ENCODE measurements at regions of chr3 and their contacts with region 1.

Region 1: DNA sequence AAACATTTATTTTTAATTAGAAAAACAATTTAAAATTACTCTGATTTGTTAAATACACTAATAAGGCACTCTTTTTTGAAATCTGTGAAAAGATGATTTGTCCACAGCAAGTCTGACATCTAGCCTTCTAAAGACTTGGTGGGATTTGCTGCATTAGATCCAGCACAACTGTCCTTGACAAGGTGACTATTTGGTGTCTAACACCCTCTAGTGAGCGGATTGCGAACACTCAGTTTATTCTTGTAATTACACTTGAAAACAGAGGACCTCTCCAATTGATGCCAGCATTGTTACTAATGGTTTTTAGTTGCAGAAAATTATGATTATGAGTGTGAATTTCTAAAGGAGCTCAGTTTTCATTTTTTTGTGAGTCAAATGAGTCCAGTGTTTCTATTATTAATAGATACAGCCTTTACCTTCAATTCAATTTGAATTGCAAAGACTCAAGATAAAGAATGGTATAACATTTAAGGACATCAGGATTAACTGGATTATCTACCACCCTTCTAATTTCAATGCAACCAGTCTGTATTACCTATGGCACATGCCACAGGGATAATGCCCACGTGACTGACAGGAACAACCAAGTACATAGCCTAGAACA is 29.7 kb upstream of the STRIT1 start:
- DNase-seq: peak; percentile 89
- ATAC-seq: peak; percentile 91
- H3K4me3 ChIP-seq: no peak overlapping the region
- H3K27ac ChIP-seq: no peak overlapping the region
- H3K4me1 ChIP-seq: no peaks in the 10 kb centered on the region
- H3K27me3 ChIP-seq: no peaks in the 10 kb centered on the region
- CTCF ChIP-seq: peak; percentile 88
- POLR2A ChIP-seq: no peak; the same call in 1 of the 2 replicates
- RAD21 ChIP-seq: peak; percentile 95

Region 2: GRCh38 chr3:154323891-154324738 is 999.0 kb before region 1 on chr3 and contains the start of gene DHX36:
- CTCF ChIA-PET with region 1: interaction called, 4 read pairs
- POLR2A ChIA-PET with region 1: no interaction called
- dilution Hi-C with region 1: no loop called
- in situ Hi-C with region 1: loop called (anchors 10 kb)
- intact Hi-C with region 1: no loop called
- DNase-seq: peak; percentile 93
- ATAC-seq: peak; percentile 94
- H3K4me3 ChIP-seq: peak within 1 kb of the TSS; percentile 75
- H3K27ac ChIP-seq: peak within 1 kb of the TSS; percentile 72
- H3K4me1 ChIP-seq: no peaks in the 10 kb centered on the region
- H3K27me3 ChIP-seq: no peaks in the 10 kb centered on the region
- CTCF ChIP-seq: no peak
- POLR2A ChIP-seq: peak; percentile 92
- RAD21 ChIP-seq: no peak
- total RNA-seq, gene DHX36: 27.1 and 34.7 TPM in 2 replicates

Region 3: GRCh38 chr3:154334973-154335420 is 988.2 kb before region 1 on chr3:
- CTCF ChIA-PET with region 1: no interaction called
- POLR2A ChIA-PET with region 1: no interaction called
- dilution Hi-C with region 1: no loop called
- in situ Hi-C with region 1: no loop called
- intact Hi-C with region 1: loop called (anchors 2 kb)
- DNase-seq: peak; percentile 53
- ATAC-seq: peak; percentile 69; the same call in 1 of the 2 replicates
- H3K4me3 ChIP-seq: no peak overlapping the region
- H3K27ac ChIP-seq: no peak overlapping the region
- H3K4me1 ChIP-seq: no peaks in the 10 kb centered on the region
- H3K27me3 ChIP-seq: peaks cover 2% of the 10 kb centered on the region; the same call in 1 of the 2 replicates
- CTCF ChIP-seq: peak; percentile 62
- POLR2A ChIP-seq: no peak
- RAD21 ChIP-seq: peak; percentile 37

Region 4: GRCh38 chr3:154766765-154767503 is 556.2 kb before region 1 on chr3:
- CTCF ChIA-PET with region 1: interaction called, 3 read pairs
- POLR2A ChIA-PET with region 1: no interaction called
- dilution Hi-C with region 1: no loop called
- in situ Hi-C with region 1: loop called (anchors 5 kb)
- intact Hi-C with region 1: no loop called
- DNase-seq: no peak
- ATAC-seq: no peak
- H3K4me3 ChIP-seq: no peak overlapping the region
- H3K27ac ChIP-seq: no peak overlapping the region
- H3K4me1 ChIP-seq: no peaks in the 10 kb centered on the region
- H3K27me3 ChIP-seq: no peaks in the 10 kb centered on the region
- CTCF ChIP-seq: no peak
- POLR2A ChIP-seq: no peak
- RAD21 ChIP-seq: no peak

Region 5: GRCh38 chr3:154904328-154904727 is 418.8 kb before region 1 on chr3:
- CTCF ChIA-PET with region 1: interaction called, 3 read pairs
- POLR2A ChIA-PET with region 1: no interaction called
- dilution Hi-C with region 1: no loop called
- in situ Hi-C with region 1: no loop called
- intact Hi-C with region 1: loop called (anchors 2 kb)
- DNase-seq: peak; percentile 54
- ATAC-seq: peak; percentile 70; the same call in 1 of the 2 replicates
- H3K4me3 ChIP-seq: no peak overlapping the region
- H3K27ac ChIP-seq: no peak overlapping the region
- H3K4me1 ChIP-seq: peaks cover 3% of the 10 kb centered on the region; the same call in 1 of the 2 replicates
- H3K27me3 ChIP-seq: no peaks in the 10 kb centered on the region
- CTCF ChIP-seq: peak; percentile 58
- POLR2A ChIP-seq: no peak
- RAD21 ChIP-seq: peak; percentile 46

Region 6: GRCh38 chr3:154954753-154955152 is 368.4 kb before region 1 on chr3:
- CTCF ChIA-PET with region 1: interaction called, 12 read pairs
- POLR2A ChIA-PET with region 1: no interaction called
- dilution Hi-C with region 1: no loop called
- in situ Hi-C with region 1: loop called (anchors 10 kb)
- intact Hi-C with region 1: loop called (anchors 1 kb)
- DNase-seq: peak; percentile 76
- ATAC-seq: 0 out of 2 replicates have a peak, but pooled peaks have one; percentile 48
- H3K4me3 ChIP-seq: no peak overlapping the region
- H3K27ac ChIP-seq: no peak overlapping the region
- H3K4me1 ChIP-seq: no peaks in the 10 kb centered on the region
- H3K27me3 ChIP-seq: no peaks in the 10 kb centered on the region
- CTCF ChIP-seq: peak; percentile 65
- POLR2A ChIP-seq: no peak
- RAD21 ChIP-seq: peak; percentile 66

Region 7: DNA sequence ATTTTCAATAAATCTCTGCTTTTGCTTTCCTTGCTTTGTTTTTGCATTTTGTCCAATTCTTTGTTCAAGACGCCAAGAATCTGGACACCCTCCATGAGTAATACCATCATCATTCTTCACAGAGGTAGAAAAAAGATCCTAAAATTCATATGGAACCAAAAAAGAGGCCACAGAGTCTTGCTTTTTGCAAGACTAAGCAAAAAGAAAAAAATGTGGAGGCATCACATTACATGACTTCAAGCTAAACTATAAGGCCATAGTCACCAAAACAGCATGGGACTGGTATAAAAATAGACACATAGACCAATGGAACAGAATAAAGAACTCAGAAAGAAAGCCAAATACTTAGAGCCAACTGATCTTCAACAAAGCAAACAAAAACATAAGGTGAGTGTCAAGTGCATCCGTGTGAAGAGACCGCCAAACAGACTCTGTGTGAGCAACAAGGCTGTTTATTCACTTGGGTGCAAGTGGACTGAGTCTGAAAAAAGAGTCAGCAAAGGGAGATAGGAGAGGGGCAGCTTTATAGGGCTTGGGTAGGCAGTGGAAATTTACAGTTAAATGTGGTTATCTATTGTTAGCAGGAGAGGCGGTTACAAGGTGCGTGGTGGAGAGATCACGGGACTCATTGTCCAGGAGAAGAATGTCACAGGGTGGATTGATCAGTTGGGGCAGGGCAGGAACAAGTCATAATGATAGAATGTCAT is 40.6 kb before region 1 on chr3:
- CTCF ChIA-PET with region 1: no interaction called
- POLR2A ChIA-PET with region 1: no interaction called
- dilution Hi-C with region 1: no loop called
- in situ Hi-C with region 1: no loop called
- intact Hi-C with region 1: no loop called
- DNase-seq: peak; percentile 74
- ATAC-seq: peak; percentile 82
- H3K4me3 ChIP-seq: no peak overlapping the region
- H3K27ac ChIP-seq: 0 out of 2 replicates have a peak overlapping the region, but pooled peaks have one; percentile 3
- H3K4me1 ChIP-seq: peaks cover 6% of the 10 kb centered on the region
- H3K27me3 ChIP-seq: no peaks in the 10 kb centered on the region
- CTCF ChIP-seq: no peak
- POLR2A ChIP-seq: no peak
- RAD21 ChIP-seq: no peak

Region 8: GRCh38 chr3:155462674-155463073 is 139.5 kb after region 1 on chr3:
- CTCF ChIA-PET with region 1: no interaction called
- POLR2A ChIA-PET with region 1: no interaction called
- dilution Hi-C with region 1: no loop called
- in situ Hi-C with region 1: no loop called
- intact Hi-C with region 1: no loop called
- DNase-seq: no peak
- ATAC-seq: no peak
- H3K4me3 ChIP-seq: no peak overlapping the region
- H3K27ac ChIP-seq: no peak overlapping the region
- H3K4me1 ChIP-seq: no peaks in the 10 kb centered on the region
- H3K27me3 ChIP-seq: no peaks in the 10 kb centered on the region
- CTCF ChIP-seq: no peak
- POLR2A ChIP-seq: no peak
- RAD21 ChIP-seq: no peak

Measured in IMR-90 (cell line).